CD8-positive, alpha-beta T cell (primary cell): ENCODE measurements at regions of chr14 and their contacts with region 1.

Region 1: GRCh38 chr14:63727774-63728728 is at the start of gene SGPP1:
- DNase-seq: peak; percentile 62 to 92 (median 78)
- ATAC-seq: peak; percentile 90
- H3K4me3 ChIP-seq: peak within 1 kb of the TSS; percentile 83 to 88
- H3K4me3 Mint-ChIP-seq: peak within 1 kb of the TSS; percentile 98
- H3K27ac ChIP-seq: peak within 1 kb of the TSS; percentile 72 to 82
- H3K27ac Mint-ChIP-seq: peak within 1 kb of the TSS; percentile 94
- H3K4me1 ChIP-seq: peaks cover 31% of the 10 kb centered on the region
- H3K4me1 Mint-ChIP-seq: peaks cover 44% of the 10 kb centered on the region
- H3K27me3 ChIP-seq: no peaks in the 10 kb centered on the region
- H3K27me3 Mint-ChIP-seq: no peaks in the 10 kb centered on the region
- CTCF ChIP-seq: no peak
- total RNA-seq, gene SGPP1: 15.9 to 16.5 TPM

Region 2: DNA sequence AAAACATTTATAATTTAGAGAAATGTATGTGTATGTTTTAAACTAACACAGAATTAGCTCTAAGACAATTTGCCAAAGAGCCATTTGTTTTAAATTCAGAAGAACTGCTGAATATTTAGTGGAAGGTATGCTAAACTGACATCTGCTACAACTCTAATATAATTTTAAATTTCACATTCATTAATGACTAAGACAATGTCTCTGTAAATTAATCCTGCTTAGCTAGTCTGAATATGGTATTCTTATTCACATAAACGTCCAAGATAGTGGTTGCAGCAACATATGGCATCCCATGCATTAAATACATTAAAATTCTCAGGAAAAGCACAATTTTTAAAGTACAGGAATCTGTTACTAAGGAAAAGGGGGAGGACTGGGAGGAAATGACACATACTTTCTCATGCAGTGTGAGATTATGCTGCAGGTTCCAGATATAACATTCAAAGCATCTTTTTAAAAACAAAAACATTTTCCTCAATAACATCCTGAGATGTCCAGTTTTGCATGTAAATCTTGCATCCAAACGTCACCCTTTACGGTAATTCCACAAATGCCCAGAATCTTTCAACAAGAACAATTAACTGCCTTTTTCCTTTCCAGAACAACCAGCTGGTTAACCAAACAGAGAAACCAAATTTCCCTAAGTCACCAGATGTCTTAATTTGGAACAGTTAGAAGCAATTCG is 113.2 kb before region 1 on chr14:
- CTCF ChIA-PET with region 1: no interaction called
- POLR2A ChIA-PET with region 1: no interaction called
- intact Hi-C with region 1: no loop called
- DNase-seq: no peak
- ATAC-seq: no peak
- H3K4me3 ChIP-seq: no peak overlapping the region
- H3K4me3 Mint-ChIP-seq: no peak overlapping the region
- H3K27ac ChIP-seq: no peak overlapping the region
- H3K27ac Mint-ChIP-seq: peak overlapping the region; percentile 64
- H3K4me1 ChIP-seq: peaks cover 9% of the 10 kb centered on the region
- H3K4me1 Mint-ChIP-seq: peaks cover 56% of the 10 kb centered on the region
- H3K27me3 ChIP-seq: no peaks in the 10 kb centered on the region
- H3K27me3 Mint-ChIP-seq: no peaks in the 10 kb centered on the region
- CTCF ChIP-seq: no peak

Region 3: DNA sequence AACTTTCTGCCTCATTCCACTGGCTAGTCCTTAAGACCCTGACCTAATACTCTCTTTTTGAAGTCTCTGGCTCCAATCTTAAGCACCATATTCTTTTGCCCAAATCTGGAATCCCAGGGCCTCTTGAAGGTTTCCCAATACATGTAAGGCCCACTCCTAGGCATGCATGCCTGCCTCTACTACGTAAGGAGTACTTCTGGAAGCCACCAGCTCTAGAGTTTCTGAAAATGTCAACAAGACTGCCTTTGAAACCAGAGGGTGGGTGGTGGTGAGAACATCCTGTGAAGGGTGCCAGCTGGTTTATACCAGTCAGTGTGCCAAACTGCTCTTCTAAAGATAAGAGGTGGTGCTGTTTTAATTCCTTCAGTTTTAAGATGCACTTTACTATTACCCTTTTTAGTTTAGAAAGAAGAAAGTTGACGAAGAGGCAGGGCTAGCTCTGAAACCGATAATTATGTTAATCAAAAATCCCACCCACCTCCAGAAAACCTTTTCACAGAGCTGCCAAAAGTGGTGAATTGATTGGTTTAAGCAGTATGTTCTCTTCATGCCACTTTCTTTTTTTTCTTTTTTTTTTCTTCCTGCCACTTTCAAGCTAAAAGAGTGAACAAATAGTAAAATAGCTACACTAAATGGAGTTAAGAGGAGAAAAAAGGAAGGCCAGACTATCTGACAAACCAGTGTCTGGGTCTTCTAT is 77.6 kb before region 1 on chr14:
- CTCF ChIA-PET with region 1: interaction called, 7 read pairs
- POLR2A ChIA-PET with region 1: interaction called, 23 read pairs
- intact Hi-C with region 1: loop called in 1 of 2 experiments (anchors 2 kb)
- DNase-seq: peak; percentile 19 to 87 (median 65)
- ATAC-seq: peak; percentile 96
- H3K4me3 ChIP-seq: peak overlapping the region; percentile 10 to 26
- H3K4me3 Mint-ChIP-seq: peak overlapping the region; percentile 69
- H3K27ac ChIP-seq: peak overlapping the region; percentile 78 to 93
- H3K27ac Mint-ChIP-seq: peak overlapping the region; percentile 100
- H3K4me1 ChIP-seq: peaks cover 40% of the 10 kb centered on the region
- H3K4me1 Mint-ChIP-seq: peaks cover 52% of the 10 kb centered on the region
- H3K27me3 ChIP-seq: no peaks in the 10 kb centered on the region
- H3K27me3 Mint-ChIP-seq: no peaks in the 10 kb centered on the region
- CTCF ChIP-seq: no peak

Region 4: DNA sequence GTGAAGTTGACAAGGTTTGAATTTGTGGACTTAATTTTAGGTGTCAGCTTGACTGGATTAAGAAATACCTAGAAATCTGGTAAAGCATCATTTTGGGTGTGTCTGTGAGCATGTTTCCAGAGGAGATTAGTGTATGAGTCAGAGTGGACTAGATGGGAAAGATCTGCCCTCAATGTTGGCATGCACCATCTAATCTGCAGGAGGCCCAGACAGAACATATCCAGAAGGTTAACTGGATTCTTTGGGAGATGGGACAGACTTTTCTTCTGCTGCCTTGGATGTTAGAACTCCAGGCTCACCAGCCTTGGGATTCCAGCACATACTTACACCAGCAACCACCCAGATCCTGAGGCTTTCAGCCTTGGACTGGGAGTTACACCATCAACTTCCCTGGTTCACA is 14.3 kb before region 1 on chr14:
- CTCF ChIA-PET with region 1: interaction called, 3 read pairs
- POLR2A ChIA-PET with region 1: interaction called, 3 read pairs
- intact Hi-C with region 1: loop called in 1 of 2 experiments (anchors 2 kb)
- DNase-seq: no peak
- ATAC-seq: no peak
- H3K4me3 ChIP-seq: no peak overlapping the region
- H3K4me3 Mint-ChIP-seq: no peak overlapping the region
- H3K27ac ChIP-seq: peak overlapping the region in 1 of 2 experiments; percentile 32
- H3K27ac Mint-ChIP-seq: no peak overlapping the region
- H3K4me1 ChIP-seq: peaks cover 19% of the 10 kb centered on the region
- H3K4me1 Mint-ChIP-seq: peaks cover 41% of the 10 kb centered on the region
- H3K27me3 ChIP-seq: no peaks in the 10 kb centered on the region
- H3K27me3 Mint-ChIP-seq: no peaks in the 10 kb centered on the region
- CTCF ChIP-seq: no peak

Region 5: GRCh38 chr14:63863004-63863403 is 135.0 kb after region 1 on chr14:
- CTCF ChIA-PET with region 1: no interaction called
- POLR2A ChIA-PET with region 1: no interaction called
- intact Hi-C with region 1: loop called in 1 of 2 experiments (anchors 5 kb)
- DNase-seq: no peak
- ATAC-seq: no peak
- H3K4me3 ChIP-seq: no peak overlapping the region
- H3K4me3 Mint-ChIP-seq: no peak overlapping the region
- H3K27ac ChIP-seq: peak overlapping the region in 1 of 2 experiments; percentile 94
- H3K27ac Mint-ChIP-seq: peak overlapping the region; percentile 90
- H3K4me1 ChIP-seq: peaks cover 41% of the 10 kb centered on the region
- H3K4me1 Mint-ChIP-seq: peaks cover 60% of the 10 kb centered on the region
- H3K27me3 ChIP-seq: no peaks in the 10 kb centered on the region
- H3K27me3 Mint-ChIP-seq: no peaks in the 10 kb centered on the region
- CTCF ChIP-seq: no peak